ENCODE measurements at regions of chr11 and their contacts with region 1.

Region 1: DNA sequence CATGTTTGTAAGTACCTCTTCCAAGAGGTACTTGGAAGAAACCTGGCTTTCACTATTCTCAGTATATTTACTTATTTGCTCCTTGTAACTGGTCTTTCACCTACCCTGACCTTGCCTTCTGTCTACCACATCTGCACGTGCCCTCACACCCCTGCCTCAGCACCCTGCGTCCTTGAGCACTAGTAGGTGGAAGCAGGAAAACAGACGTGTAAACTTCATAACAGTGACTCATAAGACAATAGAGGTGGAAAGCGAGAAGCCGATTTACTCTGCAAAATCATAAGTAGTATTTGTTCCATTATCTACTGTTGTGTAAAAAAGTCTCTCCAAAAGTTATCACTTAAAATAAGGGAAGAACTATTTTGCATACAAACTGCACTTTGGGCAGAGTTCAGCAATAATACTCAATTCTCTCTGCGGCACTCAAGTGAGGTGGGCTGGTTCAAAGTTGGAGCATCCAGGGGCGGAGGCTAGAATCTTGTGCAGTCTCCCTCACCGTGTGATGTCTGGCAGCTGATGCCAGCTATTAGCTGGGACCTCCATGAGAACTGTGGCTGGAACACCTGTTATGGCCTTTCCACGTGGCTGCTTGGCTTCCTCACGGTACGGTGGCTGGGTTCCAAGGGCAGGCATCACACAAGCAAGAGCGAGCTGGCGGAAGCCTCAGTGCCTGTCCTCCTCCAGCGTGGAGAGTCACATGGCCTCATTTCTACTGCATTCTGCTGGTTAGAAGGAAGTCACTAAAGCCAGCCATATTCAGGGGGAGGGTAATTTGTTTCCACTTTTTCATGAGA is 30.4 kb downstream of the PACS1 start:
- DNase-seq: peak; percentile 86
- H3K4me3 ChIP-seq: peak overlapping the region; percentile 53
- H3K27ac ChIP-seq: peak overlapping the region; percentile 69
- H3K4me1 ChIP-seq: peaks cover 56% of the 10 kb centered on the region
- CTCF ChIP-seq: no peak

Region 2: DNA sequence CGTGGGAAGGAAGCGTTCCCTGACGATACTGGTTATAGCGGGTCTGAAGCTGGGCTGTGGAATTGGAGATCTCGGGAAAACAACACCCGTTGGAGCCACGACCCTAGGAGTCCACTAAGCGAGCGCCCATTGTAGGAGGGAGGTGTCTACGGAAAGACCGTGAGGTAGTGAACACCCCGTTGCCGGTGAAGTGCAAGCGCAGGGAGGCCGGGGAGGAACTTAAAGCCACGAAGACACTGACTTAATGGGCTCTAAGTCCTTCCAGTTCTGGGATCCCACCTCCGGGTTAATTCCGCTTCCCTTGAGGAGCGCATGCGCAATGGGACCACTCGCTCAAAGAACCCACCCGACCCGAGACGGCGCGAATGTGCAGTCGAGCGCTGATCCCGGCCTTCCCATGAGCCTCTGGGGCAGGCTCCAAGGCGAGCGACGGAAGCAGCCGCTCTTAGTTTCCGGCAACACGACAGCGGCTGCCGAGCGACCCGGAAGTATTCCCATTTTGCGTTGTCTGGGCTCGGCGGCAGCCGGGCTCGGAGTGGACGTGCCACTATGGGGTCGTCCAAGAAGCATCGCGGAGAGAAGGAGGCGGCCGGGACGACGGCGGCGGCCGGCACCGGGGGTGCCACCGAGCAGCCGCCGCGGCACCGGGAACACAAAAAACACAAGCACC is 139.1 kb before region 1 on chr11 and contains the start of gene SART1:
- CTCF ChIA-PET with region 1: no interaction called
- POLR2A ChIA-PET with region 1: no interaction called
- intact Hi-C with region 1: no loop called
- DNase-seq: peak; percentile 99
- H3K4me3 ChIP-seq: peak within 1 kb of the TSS; percentile 89
- H3K27ac ChIP-seq: peak within 1 kb of the TSS; percentile 69
- H3K4me1 ChIP-seq: peaks cover 26% of the 10 kb centered on the region
- CTCF ChIP-seq: no peak
- total RNA-seq, gene SART1: 50.4 and 93.8 TPM in 2 replicates

Region 3: GRCh38 chr11:66089067-66089466 is 11.4 kb before region 1 on chr11:
- CTCF ChIA-PET with region 1: no interaction called
- POLR2A ChIA-PET with region 1: interaction called, 10 read pairs
- intact Hi-C with region 1: no loop called
- DNase-seq: no peak
- H3K4me3 ChIP-seq: no peak overlapping the region
- H3K27ac ChIP-seq: no peak overlapping the region
- H3K4me1 ChIP-seq: peaks cover 52% of the 10 kb centered on the region
- CTCF ChIP-seq: no peak